A549 (cell line): ENCODE measurements at regions of chr12 and their contacts with region 1.

Region 1: DNA sequence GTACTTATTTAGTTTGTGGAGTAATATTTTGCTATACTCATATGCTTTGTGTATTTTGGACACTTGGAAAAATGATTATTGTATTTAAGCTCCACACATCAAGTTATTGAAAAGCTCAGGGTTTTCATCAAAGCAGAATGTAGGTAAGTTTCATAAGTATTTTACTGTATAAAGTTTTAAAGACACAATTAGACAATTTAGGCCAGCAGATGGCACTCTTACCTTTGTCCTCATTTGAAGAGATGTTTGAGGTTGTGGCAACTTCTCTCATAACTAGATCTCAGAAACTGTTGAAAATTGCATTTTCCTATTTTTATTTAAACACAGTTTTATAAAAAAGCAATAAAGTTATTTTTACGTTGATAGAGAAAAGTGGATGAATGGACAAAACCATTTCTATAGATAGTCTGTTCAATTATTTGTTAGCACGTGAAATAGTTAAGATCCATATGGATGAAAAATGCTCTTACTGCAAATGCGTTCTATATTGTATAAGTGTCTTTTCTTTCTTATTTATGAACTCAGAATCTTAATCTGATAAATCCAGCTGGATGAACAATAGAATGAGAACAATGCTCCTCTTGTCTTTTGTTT is 300.0 kb downstream of the AEBP2 start:
- DNase-seq: peak; percentile 50 to 74
- ATAC-seq: peak in 1 of 2 experiments; percentile 76; a peak in 3 of 6 replicates
- H3K4me3 ChIP-seq: no peak overlapping the region
- H3K27ac ChIP-seq: peak overlapping the region in 1 of 2 experiments; percentile 27; a peak in 1 of 6 replicates
- H3K4me1 ChIP-seq: no peaks in the 10 kb centered on the region
- CTCF ChIP-seq: peak; percentile 84
- EP300 ChIP-seq: no peak
- POLR2A ChIP-seq: no peak
- RAD21 ChIP-seq: peak; percentile 82 to 90

Region 2: DNA sequence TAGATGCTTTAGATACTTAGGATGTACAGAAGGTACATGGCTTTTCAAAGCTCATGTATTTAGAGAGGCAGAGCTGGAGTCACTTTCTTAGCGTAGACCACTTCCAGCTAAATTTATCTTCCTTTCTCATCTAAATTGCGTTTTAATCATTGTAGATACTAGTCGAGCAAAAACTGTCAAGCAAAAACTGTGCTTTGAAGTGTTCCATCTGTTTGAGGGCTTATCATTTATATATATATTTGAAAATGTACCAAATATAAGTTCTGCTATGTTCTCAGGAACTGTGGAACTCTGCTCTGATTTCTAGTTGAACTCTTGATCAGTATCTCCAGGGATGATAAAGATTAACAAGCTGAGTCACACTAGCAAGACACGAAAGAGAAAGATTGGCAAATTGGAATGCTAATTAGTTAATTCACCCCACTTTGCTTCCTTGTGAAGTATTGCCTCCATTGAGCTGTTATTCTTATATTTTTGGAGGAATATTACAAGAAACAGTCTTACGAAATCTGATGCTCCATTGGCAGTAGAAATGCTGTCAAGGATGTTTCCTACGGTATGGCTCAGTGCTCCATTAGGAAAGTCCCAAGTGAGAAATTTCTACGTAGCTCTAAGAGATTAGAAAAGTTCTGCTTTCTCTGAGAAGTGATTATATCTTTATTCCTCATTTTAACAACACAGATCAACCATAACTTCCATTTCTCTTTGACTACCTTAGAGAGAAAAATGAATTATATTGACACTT is 10.8 kb after region 1 on chr12:
- CTCF ChIA-PET with region 1: interaction called, 17 read pairs
- POLR2A ChIA-PET with region 1: no interaction called
- DNase-seq: no peak
- ATAC-seq: no peak
- H3K4me3 ChIP-seq: no peak overlapping the region
- H3K27ac ChIP-seq: no peak overlapping the region
- H3K4me1 ChIP-seq: no peaks in the 10 kb centered on the region
- CTCF ChIP-seq: no peak
- EP300 ChIP-seq: no peak
- POLR2A ChIP-seq: no peak
- RAD21 ChIP-seq: no peak